AG04450 (cell line): ENCODE measurements at regions of chr10 and their contacts with region 1.

Region 1: DNA sequence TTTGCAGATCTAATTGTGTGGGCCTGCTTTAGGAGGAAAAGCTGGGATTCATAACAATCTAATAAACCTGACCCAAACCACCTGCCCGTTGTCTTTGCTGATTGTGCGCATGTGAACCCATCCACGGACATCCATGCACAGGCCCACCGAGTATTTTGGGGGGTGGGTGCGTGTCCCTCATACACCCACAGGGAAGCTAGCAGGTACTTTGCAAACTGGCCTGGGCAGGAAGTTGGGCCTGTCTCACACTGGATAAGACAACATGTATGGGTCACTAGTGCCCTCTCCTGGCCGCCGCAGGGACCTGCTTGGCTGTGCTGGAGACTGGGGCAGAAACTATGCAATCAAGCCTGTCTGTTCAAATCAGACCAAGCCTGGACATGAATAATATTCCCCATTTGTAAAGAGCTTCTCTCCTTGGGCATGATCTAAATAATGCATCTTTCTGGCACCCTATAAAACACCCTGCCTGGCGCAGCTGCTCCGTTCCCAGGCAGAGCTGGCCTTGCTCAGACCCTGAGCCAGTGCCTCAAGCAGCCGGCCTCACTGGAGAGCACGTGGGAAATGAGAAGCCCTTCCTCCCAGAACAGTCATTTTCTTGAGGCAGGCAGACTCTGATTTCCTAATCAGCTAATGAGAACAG is 15.8 kb downstream of the ECHDC3 start:
- DNase-seq: peak; percentile 43
- H3K4me3 ChIP-seq: no peak overlapping the region
- H3K27ac ChIP-seq: peak overlapping the region; percentile 21
- H3K27me3 ChIP-seq: peaks cover 3% of the 10 kb centered on the region
- CTCF ChIP-seq: peak; percentile 96

Region 2: DNA sequence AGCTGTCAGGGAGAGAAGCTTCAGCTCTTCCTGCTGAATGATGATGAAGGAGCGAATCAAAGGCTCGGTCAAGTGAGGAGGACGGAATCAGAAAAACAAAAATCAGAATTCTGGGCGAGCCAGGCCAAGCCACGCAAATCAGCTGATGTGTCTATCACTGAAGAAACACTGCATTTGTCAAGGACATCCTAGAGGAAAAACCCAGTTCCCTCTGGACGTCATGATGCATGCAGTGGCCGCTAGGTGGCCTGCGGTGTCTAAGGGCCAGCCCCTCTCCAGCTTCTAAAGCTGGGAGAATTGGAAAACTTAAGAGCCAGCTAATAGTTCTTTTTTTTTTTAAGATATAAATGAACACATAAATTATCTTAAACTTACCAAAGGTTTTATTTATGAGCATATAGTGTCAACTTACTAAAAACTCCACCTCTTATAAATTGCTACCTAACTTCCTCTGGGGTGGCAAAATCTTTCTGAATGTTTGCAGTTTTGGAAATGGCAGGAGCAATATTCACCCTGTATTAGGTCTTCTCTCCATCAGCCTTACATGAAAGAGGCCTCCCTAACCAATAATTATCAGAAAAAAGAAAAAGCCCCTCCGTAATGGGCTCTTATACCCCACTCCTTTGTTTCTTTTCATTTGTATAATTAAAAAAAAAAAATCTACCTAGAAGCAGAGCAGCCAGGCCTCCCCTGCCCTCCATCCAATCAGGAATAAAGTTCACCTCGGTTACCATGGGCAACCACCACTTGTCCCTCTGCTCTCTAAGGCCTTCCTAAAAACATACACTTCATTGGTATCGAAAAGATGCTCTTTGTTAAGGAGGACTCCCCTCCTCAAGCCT is 333.3 kb before region 1 on chr10:
- CTCF ChIA-PET with region 1: interaction called, 13 read pairs
- POLR2A ChIA-PET with region 1: no interaction called
- DNase-seq: peak; percentile 10
- H3K4me3 ChIP-seq: no peak overlapping the region
- H3K27ac ChIP-seq: no peak overlapping the region
- H3K27me3 ChIP-seq: no peaks in the 10 kb centered on the region
- CTCF ChIP-seq: peak; percentile 92

Region 3: DNA sequence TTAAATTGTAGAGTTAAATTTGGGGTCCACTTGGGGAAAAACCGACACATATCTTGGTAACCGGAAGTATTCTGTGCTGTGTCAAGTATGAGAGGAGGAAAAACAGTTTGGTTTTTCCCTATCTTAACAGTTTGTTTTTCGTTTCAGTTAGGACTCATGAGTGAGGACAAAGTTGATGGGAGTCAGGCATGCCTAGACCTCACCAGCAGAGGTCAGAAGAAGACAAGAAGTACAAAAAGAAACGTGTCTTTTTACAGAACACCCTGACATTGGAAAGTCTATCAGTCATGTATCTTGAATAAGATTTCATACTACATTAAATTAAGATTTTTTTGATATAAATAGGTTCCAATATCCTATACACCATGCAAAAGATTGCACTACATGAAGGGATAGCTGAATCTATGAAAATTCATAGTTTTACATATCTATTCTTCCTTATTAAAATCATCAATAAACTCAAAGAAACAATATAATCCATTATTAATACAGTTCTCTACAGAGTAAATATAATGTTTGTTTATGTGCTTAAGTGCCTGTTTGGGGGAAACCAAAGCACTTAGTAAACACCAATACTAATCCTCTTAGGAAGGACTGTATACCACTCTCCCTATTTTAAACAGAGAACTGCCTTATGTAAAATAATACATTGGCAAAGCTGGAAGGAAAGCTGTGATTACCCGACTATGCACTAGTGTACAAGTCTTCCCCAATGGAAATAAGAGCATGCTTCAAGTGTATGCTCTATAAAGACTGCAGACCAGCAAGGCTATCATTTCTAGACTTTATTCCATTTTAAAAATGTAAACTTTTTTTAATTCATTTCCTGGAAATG is 242.1 kb before region 1 on chr10:
- CTCF ChIA-PET with region 1: interaction called, 128 read pairs
- POLR2A ChIA-PET with region 1: no interaction called
- DNase-seq: peak; percentile 32
- H3K4me3 ChIP-seq: no peak overlapping the region
- H3K27ac ChIP-seq: no peak overlapping the region
- H3K27me3 ChIP-seq: no peaks in the 10 kb centered on the region
- CTCF ChIP-seq: peak; percentile 93

Region 4: GRCh38 chr10:11724938-11725776 is 32.8 kb before region 1 on chr10:
- CTCF ChIA-PET with region 1: interaction called, 16 read pairs
- POLR2A ChIA-PET with region 1: no interaction called
- DNase-seq: peak; percentile 49
- H3K4me3 ChIP-seq: no peak overlapping the region
- H3K27ac ChIP-seq: no peak overlapping the region
- H3K27me3 ChIP-seq: peaks cover 3% of the 10 kb centered on the region
- CTCF ChIP-seq: peak; percentile 90

Region 5: DNA sequence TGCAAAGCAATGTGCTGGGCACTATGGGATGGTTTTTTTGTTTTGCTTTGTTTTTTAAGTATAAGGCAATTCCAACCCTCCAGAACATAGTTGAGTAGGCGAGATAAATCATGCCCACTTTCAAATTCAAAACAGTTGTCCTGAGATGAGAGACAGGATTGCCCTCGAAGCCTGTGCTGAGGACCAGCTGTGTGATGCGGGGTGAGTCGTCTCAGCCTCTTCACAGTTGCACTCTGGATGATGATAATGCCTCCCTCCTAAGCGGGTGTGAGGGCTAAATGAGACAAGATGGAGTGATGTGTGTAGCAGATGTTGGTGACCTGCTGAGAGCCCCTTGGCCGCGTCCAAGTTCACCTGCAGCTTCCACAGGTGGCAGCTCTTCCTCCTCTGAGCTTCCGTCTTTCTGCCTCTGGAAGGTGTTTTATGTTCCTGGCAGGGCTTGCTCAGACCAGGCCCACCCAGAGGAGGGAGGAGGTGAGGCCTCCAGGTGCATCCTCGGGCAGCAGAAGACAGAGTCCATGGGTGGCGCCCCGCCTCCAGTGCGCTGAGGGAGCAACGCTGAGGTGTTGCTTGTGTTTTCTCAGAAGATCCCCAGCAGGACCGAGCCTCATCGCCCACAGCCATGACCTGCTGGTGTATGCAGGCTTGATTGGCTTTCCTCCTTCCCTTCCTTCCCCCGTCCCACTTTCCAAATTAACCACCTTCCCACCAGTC is 14.8 kb after region 1 on chr10:
- CTCF ChIA-PET with region 1: interaction called, 10 read pairs
- POLR2A ChIA-PET with region 1: no interaction called
- DNase-seq: no peak
- H3K4me3 ChIP-seq: no peak overlapping the region
- H3K27ac ChIP-seq: no peak overlapping the region
- H3K27me3 ChIP-seq: peaks cover 11% of the 10 kb centered on the region
- CTCF ChIP-seq: no peak

Region 6: DNA sequence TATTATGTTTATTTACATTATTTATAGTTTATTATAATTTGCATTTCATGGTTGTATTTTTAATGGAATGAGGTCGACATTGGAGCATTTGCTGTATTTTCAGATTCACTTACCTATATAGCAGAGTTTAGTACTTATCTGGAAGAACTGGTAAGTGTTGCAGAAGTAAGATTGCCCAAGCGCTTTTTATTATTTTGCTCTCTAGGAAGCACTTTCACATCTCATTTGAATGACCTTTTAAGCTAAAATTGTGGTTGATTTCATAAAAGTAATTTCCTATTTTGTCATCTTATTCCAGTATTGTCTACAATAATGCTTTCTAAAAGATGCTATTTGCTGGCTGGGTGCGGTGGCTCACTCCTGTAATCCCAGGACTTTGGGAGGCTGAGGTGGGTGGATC is 400.2 kb after region 1 on chr10:
- CTCF ChIA-PET with region 1: no interaction called
- POLR2A ChIA-PET with region 1: no interaction called
- DNase-seq: no peak
- H3K4me3 ChIP-seq: no peak overlapping the region
- H3K27ac ChIP-seq: no peak overlapping the region
- H3K27me3 ChIP-seq: no peaks in the 10 kb centered on the region
- CTCF ChIP-seq: no peak